Naive thymus-derived CD8-positive, alpha-beta T cell (primary cell): ENCODE measurements at regions of chr22 and their contacts with region 1.

Region 1: GRCh38 chr22:26672590-26673468 is 15.4 kb downstream of the MIAT start:
- DNase-seq: peak; percentile 74 to 97 (median 90)
- ATAC-seq: peak; percentile 64 to 76
- H3K4me3 Mint-ChIP-seq: peak overlapping the region; percentile 92 to 100 (median 98)
- H3K27ac Mint-ChIP-seq: peak overlapping the region; percentile 97 to 100 (median 99)
- H3K4me1 Mint-ChIP-seq: peaks cover 55 to 86% (median 84%) of the 10 kb centered on the region in 4 donors
- H3K27me3 Mint-ChIP-seq: no peaks in the 10 kb centered on the region

Region 2: DNA sequence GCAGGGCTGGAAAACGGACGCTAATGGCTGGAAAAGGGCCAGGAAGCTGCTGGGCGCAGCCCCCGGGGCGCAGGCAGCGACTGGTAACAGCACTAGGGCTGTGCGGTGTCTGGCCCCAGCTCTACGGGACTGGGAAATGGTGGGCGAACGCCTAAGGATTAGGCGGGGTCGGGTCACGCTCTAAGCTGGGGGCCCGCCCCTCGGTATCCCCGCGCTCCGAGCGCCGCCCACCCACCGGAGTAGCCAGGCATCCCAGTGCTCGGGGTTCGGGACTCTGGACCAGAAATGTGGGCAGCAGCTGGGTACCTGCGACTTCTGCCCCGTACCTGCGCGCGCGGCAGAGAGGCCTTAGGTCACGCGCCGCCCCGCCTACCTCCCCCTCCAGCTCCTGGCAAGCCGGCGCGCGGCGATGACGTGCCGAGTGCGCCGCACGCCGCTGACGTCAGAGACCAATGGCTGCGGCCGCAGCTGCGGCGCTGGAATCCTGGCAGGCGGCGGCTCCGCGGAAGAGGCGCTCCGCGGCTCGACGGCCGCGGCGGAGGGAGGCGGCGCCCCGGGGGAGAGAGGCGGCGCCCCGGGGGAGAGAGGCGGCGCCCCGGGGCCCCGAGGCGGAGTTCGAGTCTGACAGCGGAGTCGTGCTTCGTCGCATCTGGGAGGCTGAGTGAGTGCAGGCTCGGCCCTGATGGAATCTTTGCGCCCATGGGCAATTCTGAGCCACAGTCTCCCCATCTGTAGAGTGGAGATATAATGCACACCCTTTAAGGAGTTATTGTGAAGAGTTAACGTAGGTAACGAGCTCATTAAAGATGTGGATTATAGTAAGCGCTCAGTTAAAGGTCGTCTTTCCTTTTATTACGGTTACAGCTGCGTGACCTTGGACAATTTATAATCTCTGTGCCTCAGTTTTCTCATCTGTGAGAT is 189.1 kb before region 1 on chr22 and contains the starts of genes HPS4 and SRRD:
- POLR2A ChIA-PET with region 1: interaction called, 40 read pairs
- DNase-seq: peak; percentile 89 to 96 (median 94)
- ATAC-seq: peak; percentile 80 to 83
- H3K4me3 Mint-ChIP-seq: peak within 1 kb of the TSS; percentile 90 to 97 (median 94)
- H3K27ac Mint-ChIP-seq: peak within 1 kb of the TSS; percentile 93 to 99 (median 98)
- H3K4me1 Mint-ChIP-seq: peaks cover 44 to 72% (median 69%) of the 10 kb centered on the region in 4 donors
- H3K27me3 Mint-ChIP-seq: no peaks in the 10 kb centered on the region
- polyA plus RNA-seq, gene HPS4: 10.5 to 18.4 (median 16.2) TPM
- polyA plus RNA-seq, gene SRRD: 17.1 to 27.0 (median 17.9) TPM

Region 3: DNA sequence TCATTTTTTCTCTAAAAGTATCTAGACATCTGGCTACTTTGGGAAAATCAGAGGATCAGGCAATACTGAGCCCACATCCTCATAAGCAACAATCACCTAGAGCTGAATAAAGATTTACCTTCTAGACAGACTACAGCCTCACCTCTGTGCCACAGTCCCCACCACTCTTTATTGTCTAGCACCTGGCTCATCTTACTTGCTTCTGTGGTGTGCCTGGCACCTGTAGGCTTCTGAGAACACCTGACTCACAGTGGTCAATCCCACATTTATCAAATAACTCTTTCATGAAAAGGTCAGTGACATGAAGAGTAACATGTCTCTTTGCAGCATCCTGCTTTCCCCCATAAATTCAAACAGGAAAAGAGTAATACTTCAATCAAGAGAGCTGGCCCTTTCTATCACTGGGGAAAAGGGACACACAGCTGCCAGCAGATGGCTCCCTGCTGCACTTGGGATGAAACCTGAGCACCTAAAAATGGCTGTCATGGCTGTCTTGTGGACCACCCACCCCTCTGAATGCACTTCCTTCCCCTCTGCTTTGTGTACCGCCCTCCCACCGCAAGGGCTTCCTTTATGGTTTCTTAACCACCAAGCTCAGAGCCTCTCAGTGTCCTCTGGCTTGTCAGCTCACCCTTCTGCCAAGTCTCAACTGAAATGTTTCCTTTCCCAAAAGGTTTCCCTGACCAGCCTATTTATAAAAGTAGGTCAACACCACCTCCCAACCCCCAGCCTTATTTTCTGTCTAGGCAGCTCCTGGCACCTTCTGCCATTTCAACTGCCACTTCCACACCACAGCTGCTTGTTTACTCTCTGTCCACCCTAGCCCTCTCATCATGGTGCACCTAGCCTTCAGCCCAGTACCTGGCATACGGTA is 169.9 kb before region 1 on chr22:
- POLR2A ChIA-PET with region 1: interaction called, 13 read pairs
- DNase-seq: peak; percentile 43 to 88 (median 74)
- ATAC-seq: peak; percentile 98 to 99
- H3K4me3 Mint-ChIP-seq: peak overlapping the region; percentile 13 to 85 (median 68)
- H3K27ac Mint-ChIP-seq: peak overlapping the region; percentile 68 to 91 (median 87)
- H3K4me1 Mint-ChIP-seq: peaks cover 16 to 31% (median 22%) of the 10 kb centered on the region in 4 donors
- H3K27me3 Mint-ChIP-seq: no peaks in the 10 kb centered on the region

Region 4: DNA sequence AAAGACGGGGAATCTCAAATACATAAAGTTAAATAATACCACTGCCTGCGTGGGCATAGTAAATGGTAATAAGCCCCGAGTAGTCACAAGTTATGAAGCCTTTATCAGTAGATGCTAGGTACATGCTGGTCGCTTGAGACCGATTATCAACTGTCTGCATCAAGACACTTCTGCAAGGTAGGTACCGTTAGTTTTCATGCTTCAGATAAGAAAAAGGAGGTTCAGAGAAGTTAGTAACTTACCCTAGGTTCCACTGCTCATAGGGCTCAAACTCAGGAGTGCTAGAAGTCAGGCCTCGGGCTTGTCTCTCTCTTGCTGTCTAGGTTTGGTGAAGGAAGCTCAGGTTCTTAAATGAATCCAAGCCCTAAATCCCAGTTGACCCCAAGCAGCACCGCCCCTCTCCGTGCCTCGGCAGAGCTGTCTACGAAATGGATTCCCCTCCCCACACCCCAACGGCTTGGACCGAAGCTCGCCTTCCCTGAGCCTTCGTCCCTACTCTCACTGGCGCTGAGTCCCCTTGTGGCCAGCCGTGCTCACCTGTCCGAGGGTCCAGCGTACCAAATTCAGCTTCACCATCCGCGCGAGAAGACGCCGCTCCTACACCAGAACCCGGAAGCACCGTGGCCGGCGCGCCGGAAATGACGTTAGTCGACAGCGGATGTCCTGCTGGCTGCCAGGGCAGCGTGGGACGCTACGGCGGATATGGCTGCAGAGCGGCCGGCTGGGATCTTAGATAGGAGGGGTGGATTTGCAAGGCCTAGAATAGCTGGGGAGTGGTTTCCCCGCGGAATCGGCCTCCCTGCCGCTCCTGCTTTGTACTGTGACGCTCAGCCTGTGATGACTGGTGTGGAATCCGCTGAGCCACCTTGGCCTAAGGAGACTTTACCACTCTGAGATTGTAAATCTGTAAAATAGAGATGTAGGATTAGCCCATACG is 160.7 kb before region 1 on chr22 and contains the start of gene TFIP11:
- POLR2A ChIA-PET with region 1: interaction called, 15 read pairs
- DNase-seq: peak; percentile 80 to 94 (median 85)
- ATAC-seq: peak; percentile 95 to 97
- H3K4me3 Mint-ChIP-seq: peak within 1 kb of the TSS; percentile 95 to 100 (median 99)
- H3K27ac Mint-ChIP-seq: peak within 1 kb of the TSS; percentile 97 to 100 (median 99)
- H3K4me1 Mint-ChIP-seq: peaks cover 18 to 50% (median 44%) of the 10 kb centered on the region in 4 donors
- H3K27me3 Mint-ChIP-seq: no peaks in the 10 kb centered on the region
- polyA plus RNA-seq, gene TFIP11: 15.3 to 33.9 (median 22.3) TPM

Region 5: GRCh38 chr22:26589845-26590736 is 82.7 kb before region 1 on chr22 and contains the start of gene TPST2:
- POLR2A ChIA-PET with region 1: interaction called, 19 read pairs
- DNase-seq: peak; percentile 68 to 87 (median 80)
- ATAC-seq: peak; percentile 69 to 78
- H3K4me3 Mint-ChIP-seq: peak within 1 kb of the TSS; percentile 89 to 97 (median 94)
- H3K27ac Mint-ChIP-seq: peak within 1 kb of the TSS; percentile 90 to 98 (median 96)
- H3K4me1 Mint-ChIP-seq: peaks cover 43 to 86% (median 77%) of the 10 kb centered on the region in 4 donors
- H3K27me3 Mint-ChIP-seq: no peaks in the 10 kb centered on the region
- polyA plus RNA-seq, gene TPST2: 87.9 to 134 (median 126) TPM

Region 6: GRCh38 chr22:26617271-26618199 is 55.3 kb before region 1 on chr22 and contains the start of gene CRYBB1:
- POLR2A ChIA-PET with region 1: no interaction called
- DNase-seq: no peak
- ATAC-seq: peak in 1 of 2 donors; percentile 57
- H3K4me3 Mint-ChIP-seq: peak within 1 kb of the TSS in 1 of 10 donors; percentile 23
- H3K27ac Mint-ChIP-seq: peak within 1 kb of the TSS in 8 of 10 donors; percentile 14 to 87 (median 68)
- H3K4me1 Mint-ChIP-seq: peaks cover 21 to 44% (median 24%) of the 10 kb centered on the region in 4 donors
- H3K27me3 Mint-ChIP-seq: no peaks in the 10 kb centered on the region
- polyA plus RNA-seq, gene CRYBB1: not detected

Region 7: GRCh38 chr22:26658671-26659478 is 14.0 kb before region 1 on chr22:
- POLR2A ChIA-PET with region 1: interaction called, 55 read pairs
- DNase-seq: peak in 8 of 10 donors; percentile 35 to 77 (median 50)
- ATAC-seq: peak; percentile 56 to 68
- H3K4me3 Mint-ChIP-seq: peak overlapping the region; percentile 85 to 96 (median 92)
- H3K27ac Mint-ChIP-seq: peak overlapping the region; percentile 59 to 96 (median 88)
- H3K4me1 Mint-ChIP-seq: peaks cover 13 to 39% (median 31%) of the 10 kb centered on the region in 4 donors
- H3K27me3 Mint-ChIP-seq: peaks cover 0 to 5% (median 0%) of the 10 kb centered on the region in 5 donors